ENCODE measurements at regions of chr1 and their contacts with region 1.

Region 1: GRCh38 chr1:115839029-115839678 is 1.8 kb downstream of the NHLH2 start:
- DNase-seq: peak in 7 of 10 donors; percentile 31 to 73 (median 50)
- H3K4me3 ChIP-seq: peak overlapping the region; percentile 14 to 81 (median 60)
- H3K27ac ChIP-seq: peak overlapping the region in 58 of 59 donors; percentile 34 to 94 (median 86)
- H3K27me3 ChIP-seq: peaks cover 0 to 85% (median 54%) of the 10 kb centered on the region in 45 donors
- CTCF ChIP-seq: peak in 1 of 56 donors; percentile 7

Region 2: DNA sequence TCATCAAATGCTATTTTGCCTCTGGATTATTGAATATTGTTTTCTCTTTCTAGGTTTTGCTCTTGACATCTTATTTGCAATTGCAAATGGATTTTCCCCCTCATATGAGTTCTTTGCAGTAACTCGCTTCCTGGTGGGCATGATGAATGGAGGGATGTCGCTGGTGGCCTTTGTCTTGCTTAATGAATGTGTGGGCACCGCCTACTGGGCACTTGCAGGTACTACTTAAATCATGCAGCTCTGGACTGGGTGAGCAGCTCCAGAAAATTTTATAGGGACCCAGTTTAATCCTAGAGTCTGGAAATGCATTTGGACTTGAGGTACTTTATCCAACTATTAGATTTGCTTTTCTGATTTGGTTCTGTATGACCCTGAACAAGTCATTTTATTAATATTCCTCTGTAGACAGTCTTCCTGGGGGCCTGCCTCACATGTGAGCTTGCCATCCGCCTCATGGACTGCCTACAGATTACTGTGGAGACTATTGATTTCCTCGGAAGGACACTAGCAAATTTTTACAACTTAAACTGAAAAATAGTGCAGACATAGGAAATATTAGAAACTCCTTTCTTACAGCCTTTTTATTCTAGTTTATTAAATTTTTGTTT is 181.6 kb after region 1 on chr1:
- intact Hi-C with region 1: loop called in 1 of 2 experiments (anchors 5 kb)
- DNase-seq: peak in 9 of 10 donors; percentile 37 to 84 (median 60)
- H3K4me3 ChIP-seq: no peak overlapping the region
- H3K27ac ChIP-seq: peak overlapping the region in 31 of 59 donors; percentile 1 to 79 (median 44)
- H3K27me3 ChIP-seq: no peaks in the 10 kb centered on the region
- CTCF ChIP-seq: peak; percentile 26 to 85 (median 66)

Region 3: DNA sequence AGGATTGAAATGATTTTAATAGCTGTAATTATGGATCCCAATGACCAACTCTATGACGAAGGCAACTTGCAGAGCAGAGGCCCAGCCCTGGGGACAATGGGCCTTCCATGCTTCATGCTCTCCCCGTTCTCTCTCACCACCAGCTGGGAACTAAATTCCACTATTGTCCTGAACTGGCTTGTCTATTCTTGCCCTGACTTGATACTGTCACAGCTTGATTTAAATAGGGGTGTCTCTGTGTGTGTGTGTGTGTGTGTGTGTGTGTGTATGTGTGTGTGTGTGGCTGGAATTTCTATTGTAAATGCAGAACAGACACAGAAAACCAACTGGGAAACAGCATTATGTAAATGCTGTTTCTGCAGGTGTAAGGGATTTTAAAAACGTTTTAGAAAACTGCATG is 194.2 kb after region 1 on chr1:
- intact Hi-C with region 1: loop called in 1 of 2 experiments (anchors 5 kb)
- DNase-seq: peak in 9 of 10 donors; percentile 43 to 84 (median 70)
- H3K4me3 ChIP-seq: no peak overlapping the region
- H3K27ac ChIP-seq: peak overlapping the region; percentile 20 to 98 (median 92)
- H3K27me3 ChIP-seq: no peaks in the 10 kb centered on the region
- CTCF ChIP-seq: peak in 3 of 56 donors; percentile 14 to 19 (median 15)

Measured in dorsolateral prefrontal cortex (tissue), 120 donors.